ENCODE measurements at regions of chr12 and their contacts with region 1.

Region 1: GRCh38 chr12:107356266-107356936 is 263.1 kb upstream of the CRY1 start:
- DNase-seq: peak; percentile 16
- H3K4me3 Mint-ChIP-seq: no peak overlapping the region
- H3K27ac Mint-ChIP-seq: no peak overlapping the region
- H3K4me1 Mint-ChIP-seq: peaks cover 50% of the 10 kb centered on the region
- H3K27me3 Mint-ChIP-seq: no peaks in the 10 kb centered on the region

Region 2: GRCh38 chr12:106696681-106697417 is 659.6 kb before region 1 on chr12:
- CTCF ChIA-PET with region 1: no interaction called
- intact Hi-C with region 1: no loop called
- DNase-seq: no peak
- H3K4me3 Mint-ChIP-seq: no peak overlapping the region
- H3K27ac Mint-ChIP-seq: no peak overlapping the region
- H3K4me1 Mint-ChIP-seq: no peaks in the 10 kb centered on the region
- H3K27me3 Mint-ChIP-seq: no peaks in the 10 kb centered on the region

Region 3: GRCh38 chr12:107236824-107237511 is 119.4 kb before region 1 on chr12:
- CTCF ChIA-PET with region 1: no interaction called
- intact Hi-C with region 1: no loop called
- DNase-seq: peak; percentile 5
- H3K4me3 Mint-ChIP-seq: no peak overlapping the region
- H3K27ac Mint-ChIP-seq: no peak overlapping the region
- H3K4me1 Mint-ChIP-seq: peaks cover 17% of the 10 kb centered on the region
- H3K27me3 Mint-ChIP-seq: no peaks in the 10 kb centered on the region

Region 4: GRCh38 chr12:107328442-107329133 is 27.8 kb before region 1 on chr12:
- CTCF ChIA-PET with region 1: no interaction called
- intact Hi-C with region 1: loop called (anchors 2 kb)
- DNase-seq: peak; percentile 39
- H3K4me3 Mint-ChIP-seq: no peak overlapping the region
- H3K27ac Mint-ChIP-seq: no peak overlapping the region
- H3K4me1 Mint-ChIP-seq: peaks cover 66% of the 10 kb centered on the region
- H3K27me3 Mint-ChIP-seq: no peaks in the 10 kb centered on the region

Region 5: DNA sequence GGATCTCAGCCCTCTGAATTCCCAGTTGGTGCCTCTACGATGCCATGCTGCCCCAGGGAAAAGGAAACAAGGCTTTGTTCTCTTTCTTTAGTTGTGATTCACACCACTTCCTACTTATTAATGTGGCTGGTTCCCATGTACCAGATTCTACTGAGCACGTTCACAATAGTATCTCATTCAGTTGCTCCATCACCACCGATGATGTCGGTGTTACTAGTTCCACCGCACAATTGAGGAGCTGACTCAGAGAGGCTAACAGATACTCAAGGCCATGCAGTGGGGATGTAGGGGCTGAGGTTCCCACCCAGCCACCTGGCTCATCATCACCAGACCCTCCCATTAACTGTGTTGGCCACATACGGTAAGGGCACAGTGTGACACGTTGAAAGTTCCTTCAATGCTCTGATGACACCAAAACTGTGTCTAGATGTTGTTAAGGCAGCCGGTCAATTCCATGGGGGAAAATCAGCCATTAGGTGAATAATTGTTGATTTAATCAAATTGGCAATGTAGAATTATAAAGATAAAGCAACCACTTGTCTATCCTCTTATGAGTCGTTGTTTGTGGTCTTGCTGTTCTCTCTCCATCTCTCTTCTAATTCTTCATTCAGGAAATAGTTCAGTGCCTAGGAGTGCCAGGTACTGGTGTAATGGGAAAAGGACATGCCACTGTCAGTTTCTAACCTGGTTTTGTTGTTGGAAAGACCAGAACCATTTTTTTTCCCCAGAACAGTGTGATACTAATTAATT is 18.9 kb before region 1 on chr12:
- CTCF ChIA-PET with region 1: interaction called, 3 read pairs
- intact Hi-C with region 1: loop called (anchors 1 kb)
- DNase-seq: peak; percentile 54
- H3K4me3 Mint-ChIP-seq: no peak overlapping the region
- H3K27ac Mint-ChIP-seq: no peak overlapping the region
- H3K4me1 Mint-ChIP-seq: peaks cover 51% of the 10 kb centered on the region
- H3K27me3 Mint-ChIP-seq: no peaks in the 10 kb centered on the region

Region 6: GRCh38 chr12:107372229-107372658 is 15.8 kb after region 1 on chr12:
- CTCF ChIA-PET with region 1: interaction called, 10 read pairs
- intact Hi-C with region 1: loop called (anchors 1 kb)
- DNase-seq: peak; percentile 72
- H3K4me3 Mint-ChIP-seq: peak overlapping the region; percentile 32
- H3K27ac Mint-ChIP-seq: peak overlapping the region; percentile 83
- H3K4me1 Mint-ChIP-seq: peaks cover 77% of the 10 kb centered on the region
- H3K27me3 Mint-ChIP-seq: no peaks in the 10 kb centered on the region

Region 7: GRCh38 chr12:107580750-107581618 is 224.6 kb after region 1 on chr12:
- CTCF ChIA-PET with region 1: no interaction called
- intact Hi-C with region 1: no loop called
- DNase-seq: no peak
- H3K4me3 Mint-ChIP-seq: no peak overlapping the region
- H3K27ac Mint-ChIP-seq: no peak overlapping the region
- H3K4me1 Mint-ChIP-seq: no peaks in the 10 kb centered on the region
- H3K27me3 Mint-ChIP-seq: no peaks in the 10 kb centered on the region

Measured in activated naive CD4-positive, alpha-beta T cell treated with anti-CD3 and anti-CD28 coated beads for 36 hours (primary cell).